Activated CD4-positive, alpha-beta T cell treated with anti-CD3 and anti-CD28 coated beads for 36 hours (primary cell): ENCODE measurements at regions of chr11 and their contacts with region 1.

Region 1: DNA sequence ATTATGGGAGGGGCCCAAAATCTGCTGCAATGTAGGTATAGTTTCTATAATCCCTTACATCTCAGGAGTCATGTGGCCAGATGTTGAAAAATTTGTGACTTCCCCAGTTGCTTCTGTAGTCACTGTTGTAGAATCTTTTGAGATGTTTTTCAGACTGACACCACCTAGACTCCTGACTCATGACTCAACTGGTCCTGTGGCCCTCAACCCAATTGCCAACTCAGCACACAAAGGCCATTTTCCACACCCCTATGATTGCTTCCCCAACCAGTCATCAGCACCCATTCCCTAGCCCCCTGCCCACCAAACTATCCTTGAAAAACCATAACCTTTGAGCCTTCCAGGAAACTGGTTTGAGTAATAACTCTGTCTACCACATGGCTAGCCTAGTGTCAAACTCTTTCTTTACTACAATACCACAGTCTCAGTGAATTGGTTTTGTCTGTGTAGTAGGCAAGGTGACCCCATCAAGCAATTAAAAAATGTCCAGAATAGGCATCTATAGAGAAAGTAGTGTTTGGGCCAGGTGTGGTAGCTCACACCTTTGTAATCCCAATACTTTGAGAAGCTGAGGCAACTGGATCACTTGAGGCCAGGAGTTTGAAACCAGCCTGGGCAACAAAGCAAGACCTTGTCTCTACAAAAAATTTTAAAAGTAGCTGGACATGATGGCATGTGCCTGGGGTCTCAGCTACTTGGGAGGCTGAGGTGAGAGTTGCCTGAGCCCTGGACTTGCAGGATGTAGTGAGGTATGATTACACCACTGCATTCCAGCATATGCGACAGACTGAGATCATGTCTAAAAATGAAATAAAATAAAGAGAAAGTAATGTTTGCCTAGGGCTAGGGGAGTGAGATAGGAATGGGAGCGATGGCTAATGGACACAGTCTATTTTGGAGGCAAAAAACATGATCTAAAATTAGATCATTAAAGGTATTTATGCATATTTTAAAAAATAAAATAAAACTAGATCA is 24.1 kb upstream of the FEZ1 start:
- DNase-seq: no peak
- ATAC-seq: peak; percentile 85
- H3K4me3 Mint-ChIP-seq: no peak overlapping the region
- H3K27ac Mint-ChIP-seq: peak overlapping the region; percentile 0
- H3K4me1 Mint-ChIP-seq: peaks cover 16% of the 10 kb centered on the region
- H3K27me3 Mint-ChIP-seq: no peaks in the 10 kb centered on the region

Region 2: DNA sequence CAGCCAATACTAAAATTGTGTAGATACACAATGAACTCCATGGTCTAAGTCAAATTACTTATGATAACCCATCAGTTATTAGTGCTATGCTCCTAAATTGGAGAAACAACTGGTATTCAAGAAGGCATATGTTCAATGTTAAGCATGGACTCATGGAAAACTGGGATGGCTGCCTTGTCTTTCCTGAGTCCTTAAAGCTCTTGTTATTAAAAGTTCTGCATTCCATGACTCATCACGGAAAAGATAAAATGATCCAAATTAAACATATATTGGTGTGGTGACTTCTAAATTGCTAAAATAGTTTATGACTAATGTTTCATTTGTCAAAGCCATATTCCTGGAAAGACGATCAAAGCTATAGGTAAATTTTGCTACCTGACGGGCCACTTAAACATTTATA is 39.7 kb after region 1 on chr11:
- CTCF ChIA-PET with region 1: no interaction called
- POLR2A ChIA-PET with region 1: no interaction called
- intact Hi-C with region 1: loop called in 1 of 2 experiments (anchors 2 kb)
- DNase-seq: no peak
- ATAC-seq: no peak
- H3K4me3 Mint-ChIP-seq: no peak overlapping the region
- H3K27ac Mint-ChIP-seq: no peak overlapping the region
- H3K4me1 Mint-ChIP-seq: no peaks in the 10 kb centered on the region
- H3K27me3 Mint-ChIP-seq: peaks cover 3% of the 10 kb centered on the region

Region 3: GRCh38 chr11:125663910-125664309 is 143.8 kb after region 1 on chr11:
- CTCF ChIA-PET with region 1: no interaction called
- POLR2A ChIA-PET with region 1: no interaction called
- intact Hi-C with region 1: no loop called
- DNase-seq: no peak
- ATAC-seq: peak; percentile 39
- H3K4me3 Mint-ChIP-seq: no peak overlapping the region
- H3K27ac Mint-ChIP-seq: no peak overlapping the region
- H3K4me1 Mint-ChIP-seq: peaks cover 13% of the 10 kb centered on the region
- H3K27me3 Mint-ChIP-seq: no peaks in the 10 kb centered on the region